ENCODE measurements at regions of chr18 and their contacts with region 1.

Region 1: GRCh38 chr18:74213429-74213828 is 65.1 kb downstream of the TIMM21 start:
- DNase-seq: no peak
- H3K4me3 ChIP-seq: no peak overlapping the region
- H3K27ac ChIP-seq: no peak overlapping the region
- H3K4me1 ChIP-seq: peaks cover 17% of the 10 kb centered on the region
- H3K27me3 ChIP-seq: no peaks in the 10 kb centered on the region
- CTCF ChIP-seq: no peak

Region 2: DNA sequence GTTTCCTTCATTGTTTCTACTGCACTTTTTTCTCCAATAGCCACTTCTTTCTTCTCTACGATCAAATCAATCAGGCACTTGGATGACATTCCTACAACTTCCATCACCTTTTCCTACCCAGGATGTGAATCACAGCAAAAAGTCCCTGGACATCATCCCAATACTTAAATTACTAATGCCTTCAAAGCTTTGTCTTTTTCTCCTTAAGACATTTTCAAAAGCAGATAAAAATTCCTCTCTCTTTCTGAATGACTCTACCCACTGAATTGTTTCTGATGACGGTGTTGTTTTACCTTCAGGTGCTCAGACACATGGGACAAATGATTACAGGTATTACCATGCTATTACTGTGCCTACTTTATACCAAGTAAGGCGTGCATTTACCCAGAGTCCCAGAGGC is 566.7 kb before region 1 on chr18:
- CTCF ChIA-PET with region 1: no interaction called
- POLR2A ChIA-PET with region 1: no interaction called
- intact Hi-C with region 1: no loop called
- DNase-seq: no peak
- H3K4me3 ChIP-seq: no peak overlapping the region
- H3K27ac ChIP-seq: no peak overlapping the region
- H3K4me1 ChIP-seq: peaks cover 18% of the 10 kb centered on the region; the same call in 1 of the 2 replicates
- H3K27me3 ChIP-seq: no peaks in the 10 kb centered on the region
- CTCF ChIP-seq: no peak

Region 3: DNA sequence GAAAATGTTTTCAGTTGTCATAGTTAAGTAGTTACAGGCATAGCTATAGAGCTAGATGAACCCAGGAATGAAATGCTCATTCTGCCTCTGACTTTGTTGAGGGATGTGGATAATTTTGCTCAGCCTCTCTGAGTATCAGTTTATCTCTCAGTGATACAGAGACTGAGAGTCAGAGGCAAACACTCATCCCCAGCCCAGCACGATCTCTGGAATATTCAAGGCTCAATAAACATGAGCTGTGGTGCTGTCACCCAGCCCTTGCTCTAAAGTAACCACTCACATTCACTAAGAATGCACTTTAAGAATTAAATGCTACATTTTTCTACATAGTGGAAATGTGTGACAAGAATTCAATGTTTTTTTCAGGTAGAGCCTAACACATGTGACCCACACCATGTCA is 34.5 kb before region 1 on chr18:
- CTCF ChIA-PET with region 1: no interaction called
- POLR2A ChIA-PET with region 1: interaction called, 11 read pairs
- intact Hi-C with region 1: no loop called
- DNase-seq: no peak
- H3K4me3 ChIP-seq: no peak overlapping the region
- H3K27ac ChIP-seq: no peak overlapping the region
- H3K4me1 ChIP-seq: 0 out of 2 replicates have a peak, but pooled peaks cover 9% of the 10 kb centered on the region
- H3K27me3 ChIP-seq: peaks cover 23% of the 10 kb centered on the region; the same call in 1 of the 2 replicates
- CTCF ChIP-seq: no peak

Region 4: GRCh38 chr18:74225193-74225840 is 11.9 kb after region 1 on chr18:
- CTCF ChIA-PET with region 1: no interaction called
- POLR2A ChIA-PET with region 1: no interaction called
- intact Hi-C with region 1: no loop called
- DNase-seq: peak in 1 of 2 experiments; percentile 82
- H3K4me3 ChIP-seq: no peak overlapping the region
- H3K27ac ChIP-seq: peak overlapping the region; percentile 57
- H3K4me1 ChIP-seq: peaks cover 32% of the 10 kb centered on the region
- H3K27me3 ChIP-seq: no peaks in the 10 kb centered on the region
- CTCF ChIP-seq: no peak

Measured in PC-9 (cell line).